Activated CD8-positive, alpha-beta T cell treated with anti-CD3 and anti-CD28 coated beads, Interleukin-2, amount 10 ng/mL, durations not matched to agents 7 days and 5 days (primary cell): ENCODE measurements at regions of chr6 and their contacts with region 1.

Region 1: DNA sequence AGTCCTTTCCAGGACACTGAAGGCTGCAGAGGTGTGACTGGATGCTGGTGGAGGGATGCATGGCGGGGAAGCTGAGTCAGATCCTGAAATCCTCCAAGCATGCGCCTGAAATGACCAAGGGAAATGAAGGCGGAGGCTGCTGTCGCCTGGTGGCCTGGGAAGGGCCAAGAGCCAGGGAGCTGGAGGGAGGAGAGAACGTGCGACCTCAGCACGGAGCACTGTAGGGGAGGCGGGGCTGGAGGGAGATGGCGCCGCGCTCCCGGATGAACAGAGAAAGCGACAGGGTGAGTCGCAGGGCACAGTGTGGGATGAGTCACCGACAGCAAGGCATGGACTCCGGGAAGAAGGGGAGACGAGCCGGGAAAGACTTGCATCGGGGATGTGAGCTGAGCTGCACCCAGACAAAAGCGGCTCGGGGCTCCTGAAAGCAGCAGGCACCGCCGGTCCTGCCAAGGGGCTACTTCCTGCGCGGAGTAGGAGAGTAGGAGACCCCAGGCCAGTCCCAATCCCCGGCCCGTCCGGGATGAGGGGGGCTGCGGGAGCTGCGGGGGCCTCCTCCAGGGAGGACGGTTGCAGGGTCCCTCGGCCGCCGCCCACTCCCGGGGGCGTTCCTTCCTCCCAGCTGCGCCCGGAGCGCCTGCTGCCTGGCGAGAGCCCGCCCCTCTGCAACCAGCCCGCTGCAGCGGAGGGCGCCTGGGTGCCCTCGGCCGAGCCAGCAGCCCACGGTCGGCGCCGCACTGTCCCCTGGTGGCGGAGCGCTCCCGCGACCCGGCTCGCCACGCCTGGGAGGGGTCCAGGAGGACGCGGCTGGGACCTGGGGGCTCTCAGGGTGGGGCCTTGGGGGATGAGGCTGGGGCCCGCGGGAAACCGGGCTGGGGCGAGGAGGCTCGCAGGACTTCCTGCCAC is 11.0 kb upstream of the NQO2 start:
- DNase-seq: peak; percentile 83
- ATAC-seq: peak; percentile 79
- H3K4me3 Mint-ChIP-seq: peak overlapping the region; percentile 87
- H3K27ac Mint-ChIP-seq: peak overlapping the region; percentile 96
- H3K4me1 Mint-ChIP-seq: peaks cover 25% of the 10 kb centered on the region
- H3K27me3 Mint-ChIP-seq: peaks cover 4% of the 10 kb centered on the region

Region 2: DNA sequence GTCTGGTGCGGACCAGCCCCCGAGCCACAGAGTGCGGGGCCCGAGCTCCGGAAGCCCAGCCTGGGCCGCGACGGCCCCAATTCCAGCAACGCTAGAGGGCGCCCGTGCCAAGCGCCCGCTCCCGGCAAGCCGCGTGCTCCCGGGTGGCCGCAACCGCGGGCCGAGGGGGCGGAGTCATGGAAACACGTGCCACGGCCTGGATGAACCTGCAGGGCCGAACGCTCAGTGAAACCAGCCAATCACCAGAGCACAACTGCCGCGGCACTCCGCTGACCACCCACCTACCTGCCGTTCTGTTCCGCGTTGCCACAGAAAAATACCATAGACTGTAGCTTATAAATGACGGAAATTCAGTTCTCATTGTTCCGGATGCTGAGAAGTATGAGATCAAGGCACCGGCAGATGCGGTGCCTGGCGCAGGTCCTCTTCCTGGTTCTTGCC is 1464.6 kb before region 1 on chr6:
- CTCF ChIA-PET with region 1: no interaction called
- POLR2A ChIA-PET with region 1: no interaction called
- DNase-seq: peak; percentile 72
- ATAC-seq: peak; percentile 78
- H3K4me3 Mint-ChIP-seq: no peak overlapping the region
- H3K27ac Mint-ChIP-seq: peak overlapping the region; percentile 10
- H3K4me1 Mint-ChIP-seq: peaks cover 24% of the 10 kb centered on the region
- H3K27me3 Mint-ChIP-seq: peaks cover 4% of the 10 kb centered on the region

Region 3: DNA sequence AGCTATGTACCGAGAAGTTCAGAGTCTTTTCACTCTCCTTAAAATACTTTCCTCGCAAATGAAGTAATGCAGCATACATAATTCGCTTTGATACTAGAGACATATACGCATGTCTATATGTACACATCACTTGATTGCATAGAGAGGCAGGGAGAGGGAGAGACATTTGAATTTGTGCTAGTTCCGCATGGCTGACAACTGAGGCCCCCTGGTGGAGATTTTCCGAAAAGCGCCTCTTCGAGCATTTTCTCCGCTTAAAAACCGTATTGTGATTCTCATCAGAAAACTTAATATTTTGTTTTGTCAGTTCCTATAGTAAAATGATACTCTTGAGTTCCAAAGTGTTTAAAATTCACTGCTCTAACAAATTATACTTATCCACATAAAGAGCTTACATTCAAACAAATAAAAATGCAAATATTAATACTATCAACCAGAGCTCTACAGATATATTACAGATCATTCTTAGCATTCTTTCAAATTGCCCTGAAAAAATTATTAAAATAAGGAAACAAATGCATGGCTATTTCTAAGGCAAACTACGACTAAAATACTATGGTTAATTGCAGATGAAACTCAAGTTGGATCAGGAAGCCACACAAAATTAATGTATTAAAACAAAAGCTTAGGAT is 238.6 kb before region 1 on chr6:
- CTCF ChIA-PET with region 1: interaction called, 12 read pairs
- POLR2A ChIA-PET with region 1: interaction called, 3 read pairs
- DNase-seq: peak; percentile 79
- ATAC-seq: peak; percentile 60
- H3K4me3 Mint-ChIP-seq: no peak overlapping the region
- H3K27ac Mint-ChIP-seq: no peak overlapping the region
- H3K4me1 Mint-ChIP-seq: peaks cover 23% of the 10 kb centered on the region
- H3K27me3 Mint-ChIP-seq: peaks cover 43% of the 10 kb centered on the region

Region 4: DNA sequence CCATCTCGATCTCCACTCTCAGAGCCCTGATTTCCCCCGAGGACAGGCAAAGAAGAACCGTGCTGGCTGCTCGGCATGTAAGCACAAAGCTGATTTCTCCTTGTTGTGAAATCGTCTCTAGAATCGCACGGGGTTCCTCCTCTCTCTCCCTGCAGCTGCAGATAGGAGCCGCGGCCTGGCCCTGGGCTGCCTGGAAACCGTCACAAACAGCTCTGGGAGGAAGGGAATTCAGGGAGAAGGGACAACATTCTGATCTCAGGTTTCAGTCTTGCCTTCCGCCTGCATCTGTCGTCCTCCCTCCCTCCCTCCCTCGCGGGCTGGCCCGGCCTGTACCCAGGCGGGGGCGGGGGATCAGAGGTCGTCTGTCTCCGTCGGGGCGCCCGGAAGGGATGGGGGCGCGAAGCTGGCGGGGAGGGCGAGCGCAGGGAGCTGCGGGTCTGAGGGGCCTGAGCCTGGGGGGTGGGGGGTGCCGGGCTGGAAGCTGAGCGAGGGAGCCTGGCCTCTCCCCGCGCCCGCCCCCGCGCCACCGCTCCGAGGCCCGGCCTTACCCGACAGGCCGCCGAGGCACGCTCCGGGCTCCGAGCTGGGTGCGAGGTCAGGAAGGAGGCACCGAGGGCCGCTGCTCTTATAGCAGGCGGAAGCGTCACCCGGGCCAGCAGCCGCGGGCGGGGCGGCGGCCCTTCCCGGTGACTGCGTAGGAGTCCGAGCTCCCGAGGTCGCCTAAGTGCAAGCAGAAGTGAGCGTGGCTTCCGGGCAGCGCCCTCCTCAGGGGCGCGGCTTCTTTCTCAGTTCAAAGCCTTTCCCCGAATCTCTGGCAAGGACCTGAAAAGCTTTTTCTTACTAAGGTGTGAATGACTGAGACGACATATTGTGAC is 147.2 kb before region 1 on chr6 and contains the start of gene SERPINB1:
- CTCF ChIA-PET with region 1: interaction called, 97 read pairs
- POLR2A ChIA-PET with region 1: interaction called, 29 read pairs
- DNase-seq: peak; percentile 86
- ATAC-seq: peak; percentile 86
- H3K4me3 Mint-ChIP-seq: peak within 1 kb of the TSS; percentile 78
- H3K27ac Mint-ChIP-seq: peak within 1 kb of the TSS; percentile 78
- H3K4me1 Mint-ChIP-seq: peaks cover 58% of the 10 kb centered on the region
- H3K27me3 Mint-ChIP-seq: no peaks in the 10 kb centered on the region
- total RNA-seq, gene SERPINB1: 55.1 to 57.1 TPM

Region 5: GRCh38 chr6:2876210-2877056 is 112.2 kb before region 1 on chr6:
- CTCF ChIA-PET with region 1: interaction called, 10 read pairs
- POLR2A ChIA-PET with region 1: interaction called, 19 read pairs
- DNase-seq: peak; percentile 35
- ATAC-seq: peak; percentile 25
- H3K4me3 Mint-ChIP-seq: peak overlapping the region; percentile 74
- H3K27ac Mint-ChIP-seq: peak overlapping the region; percentile 86
- H3K4me1 Mint-ChIP-seq: peaks cover 72% of the 10 kb centered on the region
- H3K27me3 Mint-ChIP-seq: no peaks in the 10 kb centered on the region

Region 6: GRCh38 chr6:2931970-2932748 is 56.5 kb before region 1 on chr6:
- CTCF ChIA-PET with region 1: interaction called, 63 read pairs
- POLR2A ChIA-PET with region 1: interaction called, 36 read pairs
- DNase-seq: peak; percentile 91
- ATAC-seq: peak; percentile 91
- H3K4me3 Mint-ChIP-seq: no peak overlapping the region
- H3K27ac Mint-ChIP-seq: no peak overlapping the region
- H3K4me1 Mint-ChIP-seq: peaks cover 22% of the 10 kb centered on the region
- H3K27me3 Mint-ChIP-seq: no peaks in the 10 kb centered on the region

Region 7: DNA sequence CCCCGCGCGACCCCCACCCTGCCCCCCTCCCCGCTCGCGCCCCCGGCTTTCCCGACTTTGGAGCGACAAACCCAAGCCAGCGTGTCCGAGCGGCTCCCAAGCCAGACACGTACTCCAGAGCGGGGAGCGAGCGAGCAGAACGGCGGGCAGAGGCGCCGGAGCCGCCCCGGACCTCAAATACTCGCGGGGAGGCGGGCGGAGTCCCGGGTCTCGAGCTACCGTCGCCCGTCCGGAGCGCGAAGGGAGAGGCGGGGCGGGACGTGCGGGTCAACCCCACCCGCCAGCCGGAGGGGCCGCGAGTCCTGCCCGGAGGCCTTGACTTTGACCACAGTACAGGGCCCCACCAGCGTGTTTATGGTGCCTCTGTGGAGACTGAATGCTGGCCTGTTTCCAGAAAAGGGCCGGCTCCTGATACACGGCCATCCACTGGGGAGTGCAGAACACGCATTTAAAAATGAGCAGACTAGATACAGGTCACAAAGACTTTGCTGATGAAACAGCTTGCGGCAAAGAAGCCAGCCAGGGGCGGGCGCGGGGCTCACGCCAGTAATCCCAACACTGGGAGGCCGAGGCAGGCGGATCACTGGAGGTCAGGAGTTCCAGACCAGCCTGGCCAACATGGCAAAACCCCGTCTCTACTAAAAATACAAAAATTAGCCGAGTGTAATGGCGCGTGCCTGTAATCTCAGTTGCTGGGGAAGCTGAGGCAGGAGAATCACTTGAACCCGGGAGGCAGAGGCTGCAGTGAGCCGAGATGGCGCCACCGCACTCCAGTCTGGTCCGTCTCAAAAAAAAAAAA is 17.1 kb before region 1 on chr6 and contains the start of gene SERPINB6:
- CTCF ChIA-PET with region 1: interaction called, 19 read pairs
- POLR2A ChIA-PET with region 1: interaction called, 13 read pairs
- DNase-seq: peak; percentile 51
- ATAC-seq: peak; percentile 76
- H3K4me3 Mint-ChIP-seq: peak within 1 kb of the TSS; percentile 86
- H3K27ac Mint-ChIP-seq: peak within 1 kb of the TSS; percentile 84
- H3K4me1 Mint-ChIP-seq: peaks cover 36% of the 10 kb centered on the region
- H3K27me3 Mint-ChIP-seq: peaks cover 2% of the 10 kb centered on the region
- total RNA-seq, gene SERPINB6: 51.0 to 52.8 TPM

Region 8: DNA sequence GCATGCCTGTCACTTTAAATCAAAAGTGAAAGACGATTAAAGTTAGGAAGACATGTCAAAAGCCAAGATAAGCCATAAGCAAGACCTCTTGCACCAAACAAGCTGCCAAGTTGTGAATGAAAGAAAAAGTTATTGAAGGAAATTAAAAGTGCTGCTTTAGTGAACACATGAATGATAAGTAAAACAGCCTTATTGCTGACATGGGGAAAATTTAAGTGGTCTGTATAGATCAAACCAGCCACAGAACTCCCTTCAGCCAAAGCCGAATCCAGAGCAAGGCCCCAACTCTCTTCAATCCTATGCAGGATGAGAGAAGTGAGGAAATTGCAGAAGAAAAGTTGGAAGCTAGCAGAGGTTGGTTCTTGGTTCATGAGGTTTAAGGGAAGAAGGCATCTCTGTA is 70.3 kb after region 1 on chr6:
- CTCF ChIA-PET with region 1: interaction called, 12 read pairs
- POLR2A ChIA-PET with region 1: interaction called, 24 read pairs
- DNase-seq: no peak
- ATAC-seq: no peak
- H3K4me3 Mint-ChIP-seq: no peak overlapping the region
- H3K27ac Mint-ChIP-seq: peak overlapping the region; percentile 36
- H3K4me1 Mint-ChIP-seq: peaks cover 38% of the 10 kb centered on the region
- H3K27me3 Mint-ChIP-seq: peaks cover 5% of the 10 kb centered on the region

Region 9: GRCh38 chr6:3419624-3420272 is 431.1 kb after region 1 on chr6:
- CTCF ChIA-PET with region 1: no interaction called
- POLR2A ChIA-PET with region 1: no interaction called
- DNase-seq: no peak
- ATAC-seq: no peak
- H3K4me3 Mint-ChIP-seq: no peak overlapping the region
- H3K27ac Mint-ChIP-seq: no peak overlapping the region
- H3K4me1 Mint-ChIP-seq: peaks cover 2% of the 10 kb centered on the region
- H3K27me3 Mint-ChIP-seq: peaks cover 19% of the 10 kb centered on the region